Right ventricle myocardium inferior (tissue), 1 donor: ENCODE measurements at regions of chr7 and their contacts with region 1.

Region 1: GRCh38 chr7:116258734-116259133 is 48.4 kb downstream of the TES start:
- DNase-seq: no peak
- ATAC-seq: no peak

Region 2: GRCh38 chr7:116809636-116810266 is 551.0 kb after region 1 on chr7:
- intact Hi-C with region 1: loop called (anchors 5 kb)
- DNase-seq: no peak
- ATAC-seq: peak; percentile 52